Activated T-helper 2 cell treated with anti-CD3 and anti-CD28 coated beads, Interferon-gamma antibody, Interleukin-2, Interleukin-4, amounts not matched to agents 10 μg/mL and 5 μg/mL and 100 μg/mL, durations not matched to agents 14 hours and 24 hours and 36 hours (primary cell): ENCODE measurements at regions of chr9 and their contacts with region 1.

Region 1: DNA sequence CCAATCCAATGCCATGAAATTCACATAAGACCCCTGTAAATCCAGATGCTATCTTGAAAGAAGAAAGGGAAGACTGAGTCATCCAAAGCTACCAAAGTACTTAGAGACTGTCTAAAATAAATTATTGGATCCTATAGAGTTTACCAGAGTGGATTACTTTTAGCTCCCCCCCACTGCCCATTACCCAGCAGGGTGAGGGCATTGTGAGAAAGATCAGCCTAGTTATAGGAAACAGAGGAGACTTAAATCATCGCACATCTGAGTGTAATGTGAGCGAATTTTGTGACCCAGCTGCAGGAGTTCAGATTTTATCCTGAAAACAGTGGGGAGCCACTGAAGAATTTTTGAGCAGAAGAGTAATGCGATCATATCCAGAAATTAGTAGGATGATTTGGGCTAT is 1.6 kb upstream of the ENHO start:
- DNase-seq: no peak
- H3K4me3 Mint-ChIP-seq: no peak overlapping the region
- H3K27ac Mint-ChIP-seq: no peak overlapping the region
- H3K4me1 Mint-ChIP-seq: peaks cover 17% of the 10 kb centered on the region
- H3K27me3 Mint-ChIP-seq: peaks cover 49% of the 10 kb centered on the region

Region 2: GRCh38 chr9:34126207-34127034 is 397.9 kb before region 1 on chr9 and contains the start of gene DCAF12:
- intact Hi-C with region 1: no loop called
- DNase-seq: peak; percentile 90
- H3K4me3 Mint-ChIP-seq: peak within 1 kb of the TSS; percentile 98
- H3K27ac Mint-ChIP-seq: peak within 1 kb of the TSS; percentile 98
- H3K4me1 Mint-ChIP-seq: peaks cover 37% of the 10 kb centered on the region
- H3K27me3 Mint-ChIP-seq: no peaks in the 10 kb centered on the region
- total RNA-seq, gene DCAF12: 42.8 and 43.5 TPM in 2 replicates

Region 3: GRCh38 chr9:34463098-34463900 is 61.0 kb before region 1 on chr9:
- intact Hi-C with region 1: loop called (anchors 2 kb)
- DNase-seq: no peak
- H3K4me3 Mint-ChIP-seq: no peak overlapping the region
- H3K27ac Mint-ChIP-seq: no peak overlapping the region
- H3K4me1 Mint-ChIP-seq: peaks cover 20% of the 10 kb centered on the region
- H3K27me3 Mint-ChIP-seq: peaks cover 23% of the 10 kb centered on the region

Region 4: DNA sequence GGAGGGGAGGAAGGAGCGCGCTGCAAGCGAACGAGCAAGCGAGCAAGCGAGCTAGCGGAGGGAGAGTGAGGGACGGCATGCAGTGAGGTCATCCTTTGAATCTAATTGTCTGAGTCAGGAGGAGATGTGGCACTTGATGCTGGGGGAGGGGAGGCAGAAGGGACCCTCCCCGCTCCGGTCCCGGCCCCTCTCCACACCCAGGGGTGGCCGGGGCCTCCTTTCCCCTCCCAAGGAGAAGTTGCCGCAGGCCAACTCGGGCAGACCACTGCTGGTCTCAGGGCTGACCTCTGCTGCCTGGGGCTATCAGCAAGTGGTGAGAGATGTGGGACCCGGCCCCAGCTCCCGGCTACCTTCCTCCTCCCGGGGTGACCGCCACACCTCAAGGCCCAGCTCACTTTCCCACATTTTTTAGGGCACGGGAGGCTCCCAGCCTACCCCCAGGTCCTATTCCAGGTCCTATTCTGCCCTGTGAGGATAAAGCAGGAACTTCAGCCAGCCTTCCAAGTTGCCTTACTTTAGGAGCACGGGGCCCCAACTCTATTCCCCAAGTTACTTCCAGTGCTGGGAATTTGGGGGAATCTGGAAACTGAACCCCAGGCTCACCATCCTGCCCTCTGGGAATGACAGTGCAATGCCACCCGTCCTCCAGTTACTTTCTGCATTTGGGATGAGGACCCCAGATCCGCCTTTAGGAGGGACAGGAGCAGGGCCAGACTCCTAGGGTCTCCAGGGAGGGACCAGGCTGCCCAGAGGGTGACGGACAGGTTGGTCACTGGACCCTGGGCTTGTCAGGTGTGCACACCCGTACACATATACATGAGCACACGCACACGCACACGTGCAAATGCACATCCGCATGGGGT is 54.1 kb after region 1 on chr9:
- intact Hi-C with region 1: no loop called
- DNase-seq: no peak
- H3K4me3 Mint-ChIP-seq: no peak overlapping the region
- H3K27ac Mint-ChIP-seq: no peak overlapping the region
- H3K4me1 Mint-ChIP-seq: no peaks in the 10 kb centered on the region
- H3K27me3 Mint-ChIP-seq: peaks cover 58% of the 10 kb centered on the region